Uterus (tissue), 4 donors: ENCODE measurements at regions of chr16 and their contacts with region 1.

Region 1: DNA sequence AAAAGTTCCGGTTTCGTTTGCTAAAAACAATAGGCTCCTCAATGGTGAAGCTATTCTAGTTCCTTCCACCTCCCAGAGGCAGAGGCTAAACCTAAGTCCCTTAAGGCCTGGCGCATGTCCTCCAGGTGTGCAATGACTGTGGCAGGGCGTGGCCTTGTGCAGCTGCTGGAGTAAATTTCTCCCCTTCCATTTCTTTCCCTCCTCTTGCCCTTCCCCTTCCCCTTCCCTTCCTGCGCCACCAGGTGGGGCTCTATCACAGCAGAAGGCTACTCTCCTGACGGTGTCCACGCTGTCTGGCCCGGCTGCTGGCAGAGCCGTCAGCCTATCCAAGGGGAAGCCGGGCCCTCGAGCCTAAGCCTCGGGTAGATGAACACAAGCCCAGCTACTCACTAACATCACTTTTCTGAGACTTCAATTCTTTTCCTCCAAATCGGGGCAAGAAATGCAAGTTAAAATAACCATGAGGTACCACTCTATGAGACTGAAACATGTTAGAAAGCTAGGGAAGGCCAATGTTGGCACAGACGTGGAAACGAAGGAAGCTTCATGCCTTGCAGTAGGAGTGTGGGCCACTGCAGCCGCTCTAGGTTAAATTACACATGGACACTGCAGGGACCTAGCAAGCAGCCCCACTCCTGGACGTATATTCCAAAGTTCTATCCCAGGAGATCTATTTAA is 34.4 kb downstream of the C16orf78 start:
- DNase-seq: peak; percentile 80 to 85
- H3K4me3 ChIP-seq: no peak overlapping the region
- H3K27ac ChIP-seq: no peak overlapping the region
- H3K4me1 ChIP-seq: no peaks in the 10 kb centered on the region
- H3K27me3 ChIP-seq: no peaks in the 10 kb centered on the region
- CTCF ChIP-seq: peak; percentile 86 to 96 (median 94)
- POLR2A ChIP-seq: no peak

Region 2: GRCh38 chr16:49725651-49726050 is 317.6 kb after region 1 on chr16:
- intact Hi-C with region 1: no loop called
- DNase-seq: no peak
- H3K4me3 ChIP-seq: no peak overlapping the region
- H3K27ac ChIP-seq: no peak overlapping the region
- H3K4me1 ChIP-seq: no peaks in the 10 kb centered on the region
- H3K27me3 ChIP-seq: no peaks in the 10 kb centered on the region
- CTCF ChIP-seq: no peak
- POLR2A ChIP-seq: no peak

Region 3: GRCh38 chr16:49921791-49922456 is 513.9 kb after region 1 on chr16:
- intact Hi-C with region 1: loop called (anchors 5 kb)
- DNase-seq: peak; percentile 59 to 65
- H3K4me3 ChIP-seq: no peak overlapping the region
- H3K27ac ChIP-seq: no peak overlapping the region
- H3K4me1 ChIP-seq: no peaks in the 10 kb centered on the region
- H3K27me3 ChIP-seq: no peaks in the 10 kb centered on the region
- CTCF ChIP-seq: peak; percentile 51 to 80 (median 62)
- POLR2A ChIP-seq: no peak